H1 (cell line): ENCODE measurements at regions of chr1 and their contacts with region 1.

Region 1: DNA sequence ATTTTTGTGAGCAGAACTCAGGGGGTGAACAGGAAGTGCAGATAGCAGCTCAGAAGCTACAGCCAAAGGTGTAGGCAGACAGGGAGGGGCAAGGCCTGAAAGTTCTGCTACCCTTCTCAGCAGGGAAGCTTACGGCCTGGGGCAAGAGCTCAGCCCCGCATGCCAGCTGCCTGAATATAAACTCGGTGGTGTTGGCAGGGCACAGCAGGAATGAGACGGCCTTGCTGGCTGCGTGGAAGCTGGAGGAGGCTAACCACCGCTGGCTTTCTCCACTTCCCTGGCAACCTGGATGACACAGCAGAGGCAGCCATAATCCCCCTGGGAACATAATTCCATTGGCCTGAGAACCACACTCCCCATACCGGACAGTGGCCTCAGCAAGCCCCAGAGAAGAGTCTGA is 82.0 kb upstream of the PRRC2C start:
- DNase-seq: no peak
- H3K4me3 ChIP-seq: no peak overlapping the region
- H3K27ac ChIP-seq: no peak overlapping the region
- H3K4me1 ChIP-seq: peaks cover 0 to 6% (median 5%) of the 10 kb centered on the region in 4 experiments; a peak in 4 of 7 replicates
- H3K27me3 ChIP-seq: no peaks in the 10 kb centered on the region
- CTCF ChIP-seq: no peak
- EP300 ChIP-seq: no peak
- POLR2A ChIP-seq: no peak
- RAD21 ChIP-seq: no peak

Region 2: GRCh38 chr1:171167785-171168184 is 235.6 kb before region 1 on chr1:
- CTCF ChIA-PET with region 1: no interaction called
- POLR2A ChIA-PET with region 1: no interaction called
- DNase-seq: no peak
- H3K4me3 ChIP-seq: no peak overlapping the region
- H3K27ac ChIP-seq: no peak overlapping the region
- H3K4me1 ChIP-seq: no peaks in the 10 kb centered on the region; a peak in 1 of 7 replicates
- H3K27me3 ChIP-seq: no peaks in the 10 kb centered on the region
- CTCF ChIP-seq: no peak
- EP300 ChIP-seq: no peak
- POLR2A ChIP-seq: no peak
- RAD21 ChIP-seq: no peak

Region 3: DNA sequence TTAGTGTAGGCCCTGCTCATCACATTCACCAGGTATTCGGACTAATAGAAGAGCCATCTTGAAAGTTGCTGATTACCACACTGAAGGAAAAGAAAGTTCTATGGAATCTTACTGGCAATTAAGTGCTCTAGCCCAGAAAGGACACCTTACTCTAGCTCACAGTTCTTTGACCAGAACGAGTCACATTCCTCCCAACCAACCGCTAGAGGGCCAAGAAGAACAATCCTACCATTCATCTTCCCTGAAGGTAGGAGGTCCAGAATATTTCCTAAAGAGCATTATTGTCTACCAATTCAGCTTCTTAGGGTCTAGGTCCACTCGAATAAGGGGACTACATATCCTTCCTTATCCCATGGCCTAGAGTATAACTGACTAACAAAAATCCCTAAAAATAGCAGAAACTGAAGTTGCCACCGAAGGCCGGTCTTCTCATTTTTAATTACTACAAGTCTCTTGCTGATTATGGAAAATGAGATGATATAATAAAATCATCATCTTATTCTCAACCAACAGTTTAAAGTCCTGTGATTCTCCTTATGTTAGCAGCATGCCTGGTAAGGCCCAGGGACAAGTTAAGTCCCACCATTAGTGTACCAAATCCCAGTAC is 157.8 kb before region 1 on chr1:
- CTCF ChIA-PET with region 1: interaction called, 15 read pairs
- POLR2A ChIA-PET with region 1: no interaction called
- DNase-seq: no peak
- H3K4me3 ChIP-seq: no peak overlapping the region
- H3K27ac ChIP-seq: no peak overlapping the region
- H3K4me1 ChIP-seq: peaks cover 0 to 4% (median 0%) of the 10 kb centered on the region in 4 experiments; a peak in 2 of 7 replicates
- H3K27me3 ChIP-seq: no peaks in the 10 kb centered on the region; a peak in 1 of 7 replicates
- CTCF ChIP-seq: peak in 2 of 3 experiments; percentile 78 to 87; a peak in 3 of 4 replicates
- EP300 ChIP-seq: no peak
- POLR2A ChIP-seq: no peak
- RAD21 ChIP-seq: peak; percentile 55 to 72

Region 4: DNA sequence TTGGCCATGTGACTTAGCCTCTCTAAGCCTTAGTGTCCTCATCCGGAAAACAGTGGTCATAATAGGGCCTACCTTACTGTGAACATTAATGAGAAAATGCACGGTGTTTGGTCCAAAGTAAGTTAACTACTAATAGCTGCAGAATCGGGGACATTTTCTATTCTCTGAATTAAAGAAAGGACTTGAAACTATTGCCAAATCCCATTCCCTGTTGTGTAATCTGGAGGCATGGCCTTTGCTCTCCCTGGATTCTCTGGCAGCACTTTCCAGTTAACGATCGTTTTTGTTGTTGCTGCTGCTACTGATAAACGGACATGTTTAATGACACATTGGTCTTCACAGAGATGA is 58.9 kb before region 1 on chr1:
- CTCF ChIA-PET with region 1: interaction called, 12 read pairs
- POLR2A ChIA-PET with region 1: no interaction called
- DNase-seq: no peak
- H3K4me3 ChIP-seq: no peak overlapping the region
- H3K27ac ChIP-seq: no peak overlapping the region
- H3K4me1 ChIP-seq: no peaks in the 10 kb centered on the region
- H3K27me3 ChIP-seq: no peaks in the 10 kb centered on the region
- CTCF ChIP-seq: no peak
- EP300 ChIP-seq: no peak
- POLR2A ChIP-seq: no peak
- RAD21 ChIP-seq: no peak

Region 5: GRCh38 chr1:171389171-171389570 is 14.2 kb before region 1 on chr1:
- CTCF ChIA-PET with region 1: interaction called, 15 read pairs
- POLR2A ChIA-PET with region 1: interaction called, 3 read pairs
- DNase-seq: no peak
- H3K4me3 ChIP-seq: no peak overlapping the region
- H3K27ac ChIP-seq: no peak overlapping the region
- H3K4me1 ChIP-seq: no peaks in the 10 kb centered on the region
- H3K27me3 ChIP-seq: no peaks in the 10 kb centered on the region
- CTCF ChIP-seq: no peak
- EP300 ChIP-seq: no peak
- POLR2A ChIP-seq: no peak
- RAD21 ChIP-seq: no peak

Region 6: GRCh38 chr1:171422511-171422910 is 19.1 kb after region 1 on chr1:
- CTCF ChIA-PET with region 1: interaction called, 20 read pairs
- POLR2A ChIA-PET with region 1: interaction called, 3 read pairs
- DNase-seq: no peak
- H3K4me3 ChIP-seq: no peak overlapping the region
- H3K27ac ChIP-seq: no peak overlapping the region
- H3K4me1 ChIP-seq: peaks cover 5 to 10% (median 7%) of the 10 kb centered on the region in 4 experiments; a peak in 5 of 7 replicates
- H3K27me3 ChIP-seq: no peaks in the 10 kb centered on the region
- CTCF ChIP-seq: no peak
- EP300 ChIP-seq: no peak
- POLR2A ChIP-seq: no peak
- RAD21 ChIP-seq: no peak

Region 7: GRCh38 chr1:171485375-171486047 is 82.1 kb after region 1 on chr1 and contains the start of gene PRRC2C:
- CTCF ChIA-PET with region 1: interaction called, 18 read pairs
- POLR2A ChIA-PET with region 1: no interaction called
- DNase-seq: peak; percentile 86 to 94
- H3K4me3 ChIP-seq: peak within 1 kb of the TSS; percentile 69 to 92 (median 86)
- H3K27ac ChIP-seq: peak within 1 kb of the TSS; percentile 96
- H3K4me1 ChIP-seq: peaks cover 0 to 4% (median 0%) of the 10 kb centered on the region in 4 experiments; a peak in 2 of 7 replicates
- H3K27me3 ChIP-seq: no peaks in the 10 kb centered on the region
- CTCF ChIP-seq: peak; percentile 69 to 87 (median 70)
- EP300 ChIP-seq: peak in 1 of 2 experiments; percentile 46; a peak in 1 of 3 replicates
- POLR2A ChIP-seq: peak; percentile 78 to 88
- RAD21 ChIP-seq: peak; percentile 75 to 80
- total RNA-seq, gene PRRC2C: 264 and 274 TPM in 2 replicates